Activated CD4-positive, alpha-beta T cell treated with anti-CD3 and anti-CD28 coated beads for 36 hours (primary cell): ENCODE measurements at regions of chr10 and their contacts with region 1.

Region 1: DNA sequence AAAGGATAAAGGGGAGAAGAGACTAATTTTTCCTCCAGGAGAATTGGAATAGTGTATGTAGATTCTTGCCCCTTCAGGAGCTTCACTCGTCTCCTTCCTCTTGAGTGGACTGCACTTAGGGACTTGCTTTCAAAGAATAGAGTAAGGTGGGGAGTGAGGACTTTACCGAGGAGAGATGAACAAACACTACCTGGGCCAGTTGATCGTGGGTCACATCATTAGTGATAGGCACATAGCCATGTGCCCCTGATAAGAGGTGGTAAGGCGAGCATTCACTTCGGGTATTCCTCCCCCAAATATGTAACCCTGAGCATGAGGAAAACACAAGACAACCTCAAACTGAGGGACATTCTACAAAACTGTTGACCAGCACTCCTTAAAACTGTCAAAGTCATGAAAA is 14.6 kb upstream of the KIFBP start:
- DNase-seq: no peak
- ATAC-seq: no peak
- H3K4me3 Mint-ChIP-seq: no peak overlapping the region
- H3K27ac Mint-ChIP-seq: peak overlapping the region; percentile 48
- H3K4me1 Mint-ChIP-seq: peaks cover 8% of the 10 kb centered on the region
- H3K27me3 Mint-ChIP-seq: no peaks in the 10 kb centered on the region

Region 2: GRCh38 chr10:68759967-68760366 is 214.0 kb before region 1 on chr10:
- CTCF ChIA-PET with region 1: no interaction called
- POLR2A ChIA-PET with region 1: no interaction called
- intact Hi-C with region 1: loop called in 1 of 2 experiments (anchors 10 kb)
- DNase-seq: no peak
- ATAC-seq: no peak
- H3K4me3 Mint-ChIP-seq: no peak overlapping the region
- H3K27ac Mint-ChIP-seq: no peak overlapping the region
- H3K4me1 Mint-ChIP-seq: peaks cover 2% of the 10 kb centered on the region
- H3K27me3 Mint-ChIP-seq: no peaks in the 10 kb centered on the region

Region 3: DNA sequence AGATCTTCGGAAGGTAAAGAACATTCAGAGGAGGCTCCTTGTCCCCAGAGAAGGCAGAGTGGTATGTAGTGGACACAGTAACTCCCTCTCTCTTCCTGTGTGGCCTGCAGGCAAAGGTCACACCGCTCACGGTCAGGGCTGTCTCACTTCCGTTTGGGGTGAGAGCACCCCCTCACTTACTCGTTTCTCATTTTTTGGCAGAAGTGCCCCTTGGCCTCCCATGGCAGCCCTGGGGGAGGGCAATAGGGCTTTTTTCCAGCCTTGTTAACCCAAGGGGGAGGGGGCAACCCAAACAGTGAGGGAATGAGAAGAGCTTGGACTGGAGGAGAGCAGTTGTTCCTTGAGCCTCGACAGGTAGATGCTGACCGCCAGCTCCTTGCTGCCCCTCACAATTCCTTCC is 82.2 kb after region 1 on chr10:
- CTCF ChIA-PET with region 1: no interaction called
- POLR2A ChIA-PET with region 1: interaction called, 10 read pairs
- intact Hi-C with region 1: no loop called
- DNase-seq: peak; percentile 34
- ATAC-seq: no peak
- H3K4me3 Mint-ChIP-seq: no peak overlapping the region
- H3K27ac Mint-ChIP-seq: peak overlapping the region; percentile 82
- H3K4me1 Mint-ChIP-seq: peaks cover 55% of the 10 kb centered on the region
- H3K27me3 Mint-ChIP-seq: no peaks in the 10 kb centered on the region